HEK293 (cell line): ENCODE measurements at regions of chr11 and their contacts with region 1.

Region 1: GRCh38 chr11:27158722-27159679 is 118.4 kb downstream of the BBOX1 start:
- H3K4me3 ChIP-seq: no peak overlapping the region
- H3K27ac ChIP-seq: peak overlapping the region; percentile 3; the same call in 1 of the 2 replicates
- H3K4me1 ChIP-seq: no peaks in the 10 kb centered on the region; the same call in 1 of the 2 replicates
- CTCF ChIP-seq: peak; percentile 39; the same call in 1 of the 2 replicates

Region 2: DNA sequence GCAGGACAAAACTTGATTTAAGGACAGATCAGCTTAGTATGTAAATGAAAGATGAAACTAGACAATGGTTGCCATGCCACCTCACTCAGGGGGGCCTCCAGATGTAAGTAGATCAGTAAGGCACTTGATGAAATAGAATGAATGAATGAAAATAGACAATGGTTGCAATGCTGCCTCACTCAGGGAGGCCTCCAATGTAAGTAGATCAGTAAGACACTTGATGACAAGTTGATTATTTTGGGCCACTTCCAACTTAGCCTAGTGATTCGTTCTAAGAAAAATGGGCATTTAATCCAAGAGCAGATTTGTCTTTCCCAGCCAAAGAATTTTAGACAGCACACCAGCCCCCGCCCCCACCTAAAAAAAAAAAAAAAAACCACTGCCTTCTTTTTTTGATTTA is 418.0 kb before region 1 on chr11:
- CTCF ChIA-PET with region 1: interaction called, 10 read pairs
- POLR2A ChIA-PET with region 1: no interaction called
- H3K4me3 ChIP-seq: no peak overlapping the region
- H3K27ac ChIP-seq: no peak overlapping the region
- H3K4me1 ChIP-seq: peaks cover 2% of the 10 kb centered on the region; the same call in 1 of the 2 replicates
- CTCF ChIP-seq: no peak

Region 3: GRCh38 chr11:26753723-26754504 is 405.1 kb before region 1 on chr11:
- CTCF ChIA-PET with region 1: interaction called, 29 read pairs
- POLR2A ChIA-PET with region 1: no interaction called
- H3K4me3 ChIP-seq: no peak overlapping the region
- H3K27ac ChIP-seq: no peak overlapping the region
- H3K4me1 ChIP-seq: no peaks in the 10 kb centered on the region
- CTCF ChIP-seq: peak; percentile 37; the same call in 1 of the 2 replicates

Region 4: DNA sequence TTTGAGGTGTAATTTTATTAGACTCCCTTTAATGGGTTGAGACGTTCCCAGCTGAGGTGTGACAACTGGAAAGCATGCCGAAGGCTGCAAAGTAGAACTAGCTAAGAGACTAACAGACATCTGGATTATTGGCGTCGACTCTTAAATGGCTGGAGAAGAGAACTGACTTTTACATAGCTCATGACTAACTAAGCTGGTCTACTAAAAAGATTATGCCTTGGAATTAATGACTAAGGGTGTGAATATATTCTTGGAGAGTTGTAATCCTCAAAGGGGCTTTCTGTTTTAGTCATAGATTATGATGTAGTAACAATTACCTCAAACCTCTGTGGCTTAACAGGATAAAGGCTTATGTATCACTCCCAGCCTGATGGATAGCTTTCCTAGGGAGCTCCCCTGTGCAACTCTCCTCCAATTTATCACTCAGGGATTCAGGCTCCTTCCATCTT is 397.6 kb before region 1 on chr11:
- CTCF ChIA-PET with region 1: interaction called, 29 read pairs
- POLR2A ChIA-PET with region 1: no interaction called
- H3K4me3 ChIP-seq: no peak overlapping the region
- H3K27ac ChIP-seq: no peak overlapping the region
- H3K4me1 ChIP-seq: no peaks in the 10 kb centered on the region
- CTCF ChIP-seq: no peak

Region 5: GRCh38 chr11:26931248-26931631 is 227.8 kb before region 1 on chr11:
- CTCF ChIA-PET with region 1: interaction called, 10 read pairs
- POLR2A ChIA-PET with region 1: no interaction called
- H3K4me3 ChIP-seq: no peak overlapping the region
- H3K27ac ChIP-seq: no peak overlapping the region
- H3K4me1 ChIP-seq: no peaks in the 10 kb centered on the region
- CTCF ChIP-seq: no peak

Region 6: GRCh38 chr11:27139742-27140367 is 19.1 kb before region 1 on chr11:
- CTCF ChIA-PET with region 1: interaction called, 10 read pairs
- POLR2A ChIA-PET with region 1: no interaction called
- H3K4me3 ChIP-seq: no peak overlapping the region
- H3K27ac ChIP-seq: peak overlapping the region; percentile 60
- H3K4me1 ChIP-seq: peaks cover 18% of the 10 kb centered on the region
- CTCF ChIP-seq: no peak